ENCODE measurements at regions of chr13 and their contacts with region 1.

Region 1: GRCh38 chr13:22198001-22198400 is 527.1 kb downstream of the FGF9 start:
- DNase-seq: no peak
- ATAC-seq: peak in 7 of 8 donors; percentile 54 to 93 (median 79)
- H3K4me3 ChIP-seq: peak overlapping the region in 1 of 10 donors; percentile 10
- H3K27ac ChIP-seq: peak overlapping the region in 1 of 10 donors; percentile 44
- H3K4me1 ChIP-seq: peaks cover 0 to 22% (median 4%) of the 10 kb centered on the region in 9 donors
- H3K27me3 ChIP-seq: no peaks in the 10 kb centered on the region
- CTCF ChIP-seq: no peak

Region 2: GRCh38 chr13:21849323-21849722 is 348.7 kb before region 1 on chr13:
- intact Hi-C with region 1: loop called in 1 of 10 experiments (anchors 5 kb)
- DNase-seq: no peak
- ATAC-seq: peak; percentile 42 to 78 (median 68)
- H3K4me3 ChIP-seq: no peak overlapping the region
- H3K27ac ChIP-seq: no peak overlapping the region
- H3K4me1 ChIP-seq: peaks cover 0 to 12% (median 0%) of the 10 kb centered on the region in 9 donors
- H3K27me3 ChIP-seq: no peaks in the 10 kb centered on the region
- CTCF ChIP-seq: peak; percentile 23 to 61 (median 58)

Measured in heart right ventricle (tissue), 16 donors.